ENCODE measurements at regions of chr14 and their contacts with region 1.

Region 1: DNA sequence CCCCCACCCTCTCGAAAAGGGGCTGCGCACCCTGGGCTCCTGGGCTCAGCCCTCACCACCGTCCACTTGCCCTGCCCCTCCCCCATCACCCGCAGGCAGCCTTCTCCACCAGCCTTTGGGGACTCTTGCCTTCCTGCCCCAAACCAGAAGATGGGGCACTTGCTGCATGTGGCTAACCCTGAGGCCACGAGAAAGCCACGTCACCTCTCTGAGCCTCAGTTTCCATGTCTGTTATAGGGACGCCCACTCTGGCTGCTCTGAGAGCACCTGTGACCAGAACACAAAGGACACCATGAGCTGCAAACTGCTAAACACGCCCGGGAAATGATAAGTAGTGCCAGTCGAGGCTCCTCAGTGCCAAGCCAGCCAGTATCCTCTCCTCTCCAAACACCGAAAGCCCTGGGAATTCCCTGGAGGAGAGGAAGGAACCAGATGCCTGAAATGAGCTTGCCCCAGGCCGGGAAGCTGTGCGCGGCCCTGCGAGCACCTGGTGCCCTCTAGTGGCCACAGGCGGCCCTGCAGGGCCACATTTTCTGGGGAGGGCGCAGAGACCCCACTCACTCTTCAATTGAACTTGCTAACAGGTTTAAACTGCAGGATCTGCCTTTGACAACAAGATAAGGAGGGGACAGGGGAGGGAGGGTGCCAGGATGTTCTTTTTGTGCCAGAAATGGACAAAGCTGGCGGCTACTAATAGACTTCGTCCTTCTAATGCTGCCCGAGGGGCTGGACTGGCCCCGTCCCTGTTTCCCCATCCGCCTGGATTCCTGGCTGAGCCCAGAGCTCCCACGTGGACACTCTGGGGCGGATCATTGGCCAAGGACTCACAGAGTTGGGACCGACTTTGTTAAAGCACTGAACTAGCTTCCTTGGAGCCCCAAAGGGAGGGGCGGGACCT is 10.2 kb upstream of the SERPINA9 start:
- DNase-seq: peak; percentile 22
- ATAC-seq: peak; percentile 86
- H3K4me3 ChIP-seq: peak overlapping the region; percentile 3 to 25; a peak in 3 of 4 replicates
- H3K27ac ChIP-seq: no peak overlapping the region
- H3K4me1 ChIP-seq: peaks cover 0 to 13% of the 10 kb centered on the region in 2 experiments; a peak in 2 of 4 replicates
- H3K27me3 ChIP-seq: 0 out of 2 replicates have a peak, but pooled peaks cover 4% of the 10 kb centered on the region
- CTCF ChIP-seq: peak; percentile 90 to 99 (median 99)
- POLR2A ChIP-seq: no peak
- RAD21 ChIP-seq: peak; percentile 85

Region 2: GRCh38 chr14:94423453-94424056 is 62.6 kb before region 1 on chr14:
- CTCF ChIA-PET with region 1: interaction called, 31 read pairs
- POLR2A ChIA-PET with region 1: no interaction called
- RAD21 ChIA-PET with region 1: no interaction called
- intact Hi-C with region 1: no loop called
- DNase-seq: peak; percentile 75
- ATAC-seq: peak; percentile 99
- H3K4me3 ChIP-seq: no peak overlapping the region
- H3K27ac ChIP-seq: no peak overlapping the region
- H3K4me1 ChIP-seq: peaks cover 0 to 6% of the 10 kb centered on the region in 2 experiments; a peak in 1 of 4 replicates
- H3K27me3 ChIP-seq: peaks cover 10% of the 10 kb centered on the region
- CTCF ChIP-seq: peak; percentile 80 to 83 (median 82)
- POLR2A ChIP-seq: no peak
- RAD21 ChIP-seq: peak; percentile 74

Region 3: GRCh38 chr14:94428610-94429009 is 57.6 kb before region 1 on chr14:
- CTCF ChIA-PET with region 1: interaction called, 56 read pairs
- POLR2A ChIA-PET with region 1: interaction called, 3 read pairs
- RAD21 ChIA-PET with region 1: interaction called, 14 to 19 read pairs
- intact Hi-C with region 1: no loop called
- DNase-seq: no peak
- ATAC-seq: no peak
- H3K4me3 ChIP-seq: no peak overlapping the region
- H3K27ac ChIP-seq: no peak overlapping the region
- H3K4me1 ChIP-seq: peaks cover 0 to 2% of the 10 kb centered on the region in 2 experiments; a peak in 1 of 4 replicates
- H3K27me3 ChIP-seq: peaks cover 10% of the 10 kb centered on the region
- CTCF ChIP-seq: no peak
- POLR2A ChIP-seq: no peak
- RAD21 ChIP-seq: no peak

Region 4: GRCh38 chr14:94439453-94440057 is 46.6 kb before region 1 on chr14:
- CTCF ChIA-PET with region 1: interaction called, 56 read pairs
- POLR2A ChIA-PET with region 1: no interaction called
- RAD21 ChIA-PET with region 1: no interaction called
- intact Hi-C with region 1: loop called (anchors 1 kb)
- DNase-seq: no peak
- ATAC-seq: peak; percentile 52
- H3K4me3 ChIP-seq: no peak overlapping the region
- H3K27ac ChIP-seq: no peak overlapping the region
- H3K4me1 ChIP-seq: no peaks in the 10 kb centered on the region
- H3K27me3 ChIP-seq: no peaks in the 10 kb centered on the region; the same call in 1 of the 2 replicates
- CTCF ChIP-seq: peak in 2 of 3 experiments; percentile 23 to 30; a peak in 3 of 6 replicates
- POLR2A ChIP-seq: no peak
- RAD21 ChIP-seq: no peak

Region 5: GRCh38 chr14:94474581-94475031 is 11.6 kb before region 1 on chr14:
- CTCF ChIA-PET with region 1: interaction called, 23 read pairs
- POLR2A ChIA-PET with region 1: no interaction called
- RAD21 ChIA-PET with region 1: no interaction called
- intact Hi-C with region 1: no loop called
- DNase-seq: no peak
- ATAC-seq: peak; percentile 88
- H3K4me3 ChIP-seq: no peak overlapping the region
- H3K27ac ChIP-seq: no peak overlapping the region
- H3K4me1 ChIP-seq: peaks cover 0 to 18% of the 10 kb centered on the region in 2 experiments; a peak in 3 of 4 replicates
- H3K27me3 ChIP-seq: no peaks in the 10 kb centered on the region; the same call in 1 of the 2 replicates
- CTCF ChIP-seq: no peak
- POLR2A ChIP-seq: no peak
- RAD21 ChIP-seq: no peak

Region 6: GRCh38 chr14:94517641-94518257 is 31.6 kb after region 1 on chr14:
- CTCF ChIA-PET with region 1: no interaction called
- POLR2A ChIA-PET with region 1: no interaction called
- RAD21 ChIA-PET with region 1: no interaction called
- intact Hi-C with region 1: no loop called
- DNase-seq: no peak
- ATAC-seq: no peak
- H3K4me3 ChIP-seq: no peak overlapping the region
- H3K27ac ChIP-seq: no peak overlapping the region
- H3K4me1 ChIP-seq: no peaks in the 10 kb centered on the region
- H3K27me3 ChIP-seq: 0 out of 2 replicates have a peak, but pooled peaks cover under 1% of the 10 kb centered on the region
- CTCF ChIP-seq: no peak
- POLR2A ChIP-seq: no peak
- RAD21 ChIP-seq: no peak

Region 7: GRCh38 chr14:94536823-94537222 is 50.6 kb after region 1 on chr14:
- CTCF ChIA-PET with region 1: interaction called, 5 read pairs
- POLR2A ChIA-PET with region 1: no interaction called
- RAD21 ChIA-PET with region 1: no interaction called
- intact Hi-C with region 1: loop called (anchors 5 kb)
- DNase-seq: peak; percentile 74
- ATAC-seq: peak; percentile 93
- H3K4me3 ChIP-seq: no peak overlapping the region
- H3K27ac ChIP-seq: no peak overlapping the region
- H3K4me1 ChIP-seq: peaks cover 0 to 12% of the 10 kb centered on the region in 2 experiments; a peak in 2 of 4 replicates
- H3K27me3 ChIP-seq: no peaks in the 10 kb centered on the region
- CTCF ChIP-seq: peak; percentile 44 to 57 (median 57); a peak in 5 of 6 replicates
- POLR2A ChIP-seq: no peak
- RAD21 ChIP-seq: peak; percentile 66

Region 8: DNA sequence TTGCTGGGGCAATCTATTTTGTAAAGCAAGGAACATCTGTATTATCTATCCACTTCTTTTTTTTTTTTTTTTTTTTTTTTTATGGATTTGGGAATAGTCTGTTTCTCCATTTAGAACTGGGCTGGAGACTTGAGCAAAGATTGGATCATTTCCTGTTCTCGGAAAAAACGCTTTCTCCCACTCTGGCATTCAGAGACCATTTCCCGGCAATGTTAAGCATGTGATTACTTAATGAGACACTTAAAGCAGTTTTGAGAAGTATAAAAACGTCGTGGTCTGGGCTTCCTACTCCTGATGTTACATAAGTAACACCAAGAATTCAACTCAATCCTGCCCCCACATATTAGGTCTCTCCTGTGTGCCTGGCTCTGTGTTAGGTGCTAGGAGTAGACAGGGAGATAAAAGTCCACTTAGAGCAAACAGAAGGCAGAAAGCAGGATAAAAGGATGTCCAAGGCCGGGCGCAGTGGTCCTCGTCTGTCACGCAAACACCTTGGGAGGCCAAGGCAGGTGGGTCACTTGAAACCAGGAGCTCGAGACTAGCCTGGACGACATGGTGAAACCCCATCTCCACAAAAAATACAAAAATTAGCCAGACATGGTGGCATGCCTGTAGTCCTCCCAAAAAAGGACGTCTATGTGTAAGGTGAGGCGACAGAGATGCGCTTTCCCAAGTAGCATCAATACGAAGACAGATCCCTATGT is 435.8 kb after region 1 on chr14:
- CTCF ChIA-PET with region 1: no interaction called
- POLR2A ChIA-PET with region 1: no interaction called
- RAD21 ChIA-PET with region 1: no interaction called
- intact Hi-C with region 1: no loop called
- DNase-seq: no peak
- ATAC-seq: no peak
- H3K4me3 ChIP-seq: no peak overlapping the region
- H3K27ac ChIP-seq: no peak overlapping the region
- H3K4me1 ChIP-seq: peaks cover 2 to 8% of the 10 kb centered on the region in 2 experiments; a peak in 2 of 4 replicates
- H3K27me3 ChIP-seq: peaks cover 3% of the 10 kb centered on the region; the same call in 1 of the 2 replicates
- CTCF ChIP-seq: no peak
- POLR2A ChIP-seq: no peak
- RAD21 ChIP-seq: no peak

Measured in HCT116 (cell line).